ENCODE measurements at regions of chr3 and their contacts with region 1.

Region 1: GRCh38 chr3:11059090-11059798 is 66.7 kb downstream of the SLC6A1 start:
- DNase-seq: peak; percentile 30
- H3K4me3 ChIP-seq: no peak overlapping the region
- H3K27ac ChIP-seq: no peak overlapping the region
- H3K4me1 ChIP-seq: no peaks in the 10 kb centered on the region
- CTCF ChIP-seq: peak; percentile 68

Region 2: DNA sequence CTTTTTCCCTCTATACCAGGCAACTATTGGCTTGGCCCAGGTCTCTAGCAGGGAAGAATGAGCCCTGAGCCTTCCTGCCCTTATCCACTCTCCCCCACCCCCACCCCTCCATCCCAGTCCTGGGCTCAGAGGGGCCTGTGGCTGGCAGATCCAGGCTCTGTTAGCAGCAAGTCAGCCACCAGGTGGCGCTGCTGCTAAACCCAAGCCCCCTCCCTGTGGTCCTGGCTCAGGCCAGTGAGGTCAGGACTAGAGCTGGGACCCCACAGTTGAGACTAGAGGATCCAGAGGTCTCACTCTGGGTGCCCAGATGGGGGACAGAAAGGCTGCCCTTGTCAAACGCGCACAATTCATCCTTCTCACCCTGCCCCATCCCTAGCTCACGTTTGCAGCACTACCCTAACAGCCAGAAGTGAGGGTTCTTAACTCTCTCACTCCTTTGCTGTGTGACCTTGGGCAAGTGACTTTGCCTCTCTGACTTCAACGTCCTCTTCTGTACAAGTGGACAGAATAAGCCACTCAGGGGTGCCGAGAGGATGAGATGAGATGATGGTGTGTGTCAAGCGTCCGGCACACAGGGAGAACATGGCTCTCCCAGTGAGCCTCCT is 113.5 kb before region 1 on chr3:
- CTCF ChIA-PET with region 1: no interaction called
- POLR2A ChIA-PET with region 1: no interaction called
- intact Hi-C with region 1: loop called (anchors 1 kb)
- DNase-seq: peak; percentile 71
- H3K4me3 ChIP-seq: no peak overlapping the region
- H3K27ac ChIP-seq: no peak overlapping the region
- H3K4me1 ChIP-seq: no peaks in the 10 kb centered on the region
- CTCF ChIP-seq: peak; percentile 91